ENCODE measurements at regions of chr17 and their contacts with region 1.

Region 1: GRCh38 chr17:81959362-81960129 is 1.4 kb downstream of the NOTUM start:
- DNase-seq: peak; percentile 67 to 96 (median 81)
- ATAC-seq: peak; percentile 97
- H3K4me3 ChIP-seq: peak overlapping the region; percentile 24
- H3K4me3 Mint-ChIP-seq: peak overlapping the region; percentile 34
- H3K27ac ChIP-seq: no peak overlapping the region
- H3K27ac Mint-ChIP-seq: no peak overlapping the region
- H3K4me1 ChIP-seq: peaks cover 21% of the 10 kb centered on the region
- H3K4me1 Mint-ChIP-seq: no peaks in the 10 kb centered on the region
- H3K27me3 ChIP-seq: peaks cover 26 to 31% of the 10 kb centered on the region in 2 experiments
- H3K27me3 Mint-ChIP-seq: peaks cover 14% of the 10 kb centered on the region
- CTCF ChIP-seq: peak; percentile 65

Region 2: GRCh38 chr17:81927653-81928543 is 31.6 kb before region 1 on chr17 and contains the start of gene MAFG:
- CTCF ChIA-PET with region 1: interaction called, 16 read pairs
- POLR2A ChIA-PET with region 1: interaction called, 5 read pairs
- intact Hi-C with region 1: no loop called
- DNase-seq: peak; percentile 78 to 97 (median 87)
- ATAC-seq: peak; percentile 58
- H3K4me3 ChIP-seq: peak within 1 kb of the TSS; percentile 61
- H3K4me3 Mint-ChIP-seq: peak within 1 kb of the TSS; percentile 88
- H3K27ac ChIP-seq: peak within 1 kb of the TSS; percentile 54 to 65
- H3K27ac Mint-ChIP-seq: peak within 1 kb of the TSS; percentile 88
- H3K4me1 ChIP-seq: peaks cover 51% of the 10 kb centered on the region
- H3K4me1 Mint-ChIP-seq: peaks cover 20% of the 10 kb centered on the region
- H3K27me3 ChIP-seq: peaks cover 19% of the 10 kb centered on the region in 2 experiments
- H3K27me3 Mint-ChIP-seq: peaks cover 16% of the 10 kb centered on the region
- CTCF ChIP-seq: no peak
- total RNA-seq, gene MAFG: 10.8 to 13.3 TPM

Region 3: DNA sequence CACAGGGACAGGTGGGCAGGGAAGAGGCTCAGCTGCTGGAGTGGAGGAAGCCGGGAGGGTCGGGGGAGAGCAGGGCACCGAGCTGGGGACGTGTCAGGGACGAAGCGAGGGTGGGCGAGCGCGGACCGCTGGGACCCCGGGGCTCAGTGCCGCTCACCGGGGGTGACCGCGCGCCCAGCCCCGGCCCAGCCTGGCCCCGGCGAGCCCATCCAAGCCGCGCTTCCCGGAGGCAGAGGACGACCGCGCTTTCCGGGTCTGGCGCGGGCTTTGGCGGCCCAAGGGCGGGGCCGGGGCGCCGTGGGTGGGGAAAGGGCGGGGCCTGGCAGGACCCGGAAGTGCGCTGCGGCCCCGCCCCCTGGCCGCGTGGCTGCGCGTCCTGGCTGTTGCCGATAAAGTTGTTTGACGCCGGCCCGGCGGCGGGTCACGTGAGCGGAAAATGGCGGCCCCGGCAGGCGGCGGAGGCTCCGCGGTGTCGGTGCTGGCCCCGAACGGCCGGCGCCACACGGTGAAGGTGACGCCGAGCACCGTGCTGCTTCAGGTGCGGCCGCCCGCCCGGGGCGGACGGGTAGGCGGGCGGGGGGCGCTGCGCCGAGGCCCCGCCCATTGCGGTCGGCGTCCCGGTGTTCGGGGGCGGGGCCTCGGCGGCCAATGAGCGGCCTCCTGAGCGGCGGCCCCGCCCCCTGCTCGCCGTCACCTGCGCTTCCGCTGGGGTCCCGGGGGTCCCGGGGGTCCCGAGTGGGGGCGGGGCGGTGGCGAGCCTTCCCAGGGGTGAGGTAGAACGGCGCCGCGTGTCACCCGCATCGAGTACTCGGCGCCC is 17.9 kb after region 1 on chr17 and contains the start of gene ASPSCR1:
- CTCF ChIA-PET with region 1: interaction called, 21 read pairs
- POLR2A ChIA-PET with region 1: interaction called, 10 read pairs
- intact Hi-C with region 1: loop called in 1 of 2 experiments (anchors 2 kb)
- DNase-seq: peak; percentile 81 to 96 (median 90)
- ATAC-seq: peak; percentile 88
- H3K4me3 ChIP-seq: peak within 1 kb of the TSS; percentile 68
- H3K4me3 Mint-ChIP-seq: peak within 1 kb of the TSS; percentile 99
- H3K27ac ChIP-seq: peak within 1 kb of the TSS; percentile 18 to 75
- H3K27ac Mint-ChIP-seq: peak within 1 kb of the TSS; percentile 95
- H3K4me1 ChIP-seq: peaks cover 50% of the 10 kb centered on the region
- H3K4me1 Mint-ChIP-seq: peaks cover 43% of the 10 kb centered on the region
- H3K27me3 ChIP-seq: no peaks in the 10 kb centered on the region
- H3K27me3 Mint-ChIP-seq: no peaks in the 10 kb centered on the region
- CTCF ChIP-seq: no peak
- total RNA-seq, gene ASPSCR1: 19.1 to 22.7 TPM

Region 4: DNA sequence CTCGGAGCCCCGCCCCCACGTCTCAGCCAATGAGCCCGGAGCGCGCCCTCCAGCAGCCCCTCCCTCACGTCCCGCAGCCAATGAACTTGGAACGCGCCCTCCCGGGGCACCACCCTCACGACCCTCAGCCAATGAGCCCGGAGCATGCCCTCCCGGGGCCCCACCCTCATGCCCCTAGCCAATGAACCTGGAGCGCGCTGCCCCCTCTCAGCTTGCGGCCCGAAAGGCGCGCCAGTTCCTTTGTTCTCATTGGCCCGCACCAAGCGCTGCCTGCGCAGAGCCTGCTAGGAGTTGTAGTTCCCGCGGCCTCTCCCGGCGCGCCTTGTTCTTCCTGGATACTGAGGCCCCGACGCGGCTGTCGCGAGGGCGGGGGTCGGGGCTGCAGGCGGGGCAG is 63.4 kb after region 1 on chr17 and contains the start of gene LRRC45:
- CTCF ChIA-PET with region 1: interaction called, 174 read pairs
- POLR2A ChIA-PET with region 1: interaction called, 51 read pairs
- intact Hi-C with region 1: loop called (anchors 1 kb)
- DNase-seq: peak; percentile 99 to 100 (median 100)
- ATAC-seq: peak; percentile 94
- H3K4me3 ChIP-seq: peak within 1 kb of the TSS; percentile 71
- H3K4me3 Mint-ChIP-seq: peak within 1 kb of the TSS; percentile 92
- H3K27ac ChIP-seq: peak within 1 kb of the TSS in 1 of 2 donors; percentile 46
- H3K27ac Mint-ChIP-seq: peak within 1 kb of the TSS; percentile 69
- H3K4me1 ChIP-seq: peaks cover 47% of the 10 kb centered on the region
- H3K4me1 Mint-ChIP-seq: peaks cover 21% of the 10 kb centered on the region
- H3K27me3 ChIP-seq: no peaks in the 10 kb centered on the region
- H3K27me3 Mint-ChIP-seq: no peaks in the 10 kb centered on the region
- CTCF ChIP-seq: no peak
- total RNA-seq, gene LRRC45: 17.7 to 17.9 TPM

Region 5: DNA sequence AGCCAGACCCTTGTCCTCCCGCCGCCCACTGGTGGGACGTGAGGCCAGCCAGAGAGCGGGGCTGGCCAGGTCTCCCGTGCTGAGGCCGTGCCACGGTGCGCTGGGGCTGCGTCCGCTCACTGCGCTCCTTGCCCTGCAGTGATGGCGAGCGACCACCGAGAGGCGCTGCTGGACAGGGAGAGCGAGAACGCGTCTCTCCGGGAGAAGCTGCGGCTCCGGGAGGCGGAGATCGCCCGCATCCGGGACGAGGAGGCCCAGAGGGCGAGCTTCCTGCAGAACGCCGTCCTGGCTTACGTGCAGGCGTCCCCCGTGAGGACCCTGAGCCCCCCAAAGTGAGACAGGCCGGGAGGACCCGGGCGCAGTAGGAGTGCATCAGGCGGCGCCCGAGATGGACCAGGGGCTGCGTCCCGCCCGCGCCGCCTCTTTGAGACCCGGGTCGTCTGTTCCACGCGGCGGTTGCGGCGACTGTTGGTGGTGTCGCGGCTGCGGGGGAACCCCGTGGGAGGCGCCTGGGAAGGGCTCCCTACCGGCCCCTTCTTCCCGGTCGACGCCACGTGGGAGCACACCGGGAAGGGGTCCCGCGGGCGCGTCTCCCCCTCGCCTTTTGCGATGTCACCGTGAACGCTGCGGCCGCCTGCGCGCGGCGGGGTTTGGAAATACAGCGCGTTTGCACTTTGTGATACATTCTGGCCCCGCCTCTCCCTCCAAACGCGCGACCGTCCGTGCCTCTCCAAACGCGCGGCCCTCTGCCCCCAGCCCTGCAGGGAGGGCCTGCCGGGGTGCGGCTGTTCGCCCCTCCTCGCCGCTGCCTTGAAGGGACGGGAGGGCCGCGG is 71.1 kb after region 1 on chr17:
- CTCF ChIA-PET with region 1: interaction called, 12 read pairs
- POLR2A ChIA-PET with region 1: interaction called, 5 read pairs
- intact Hi-C with region 1: no loop called
- DNase-seq: peak; percentile 73 to 92 (median 81)
- ATAC-seq: peak; percentile 85
- H3K4me3 ChIP-seq: peak overlapping the region; percentile 53
- H3K4me3 Mint-ChIP-seq: peak overlapping the region; percentile 91
- H3K27ac ChIP-seq: no peak overlapping the region
- H3K27ac Mint-ChIP-seq: no peak overlapping the region
- H3K4me1 ChIP-seq: peaks cover 28% of the 10 kb centered on the region
- H3K4me1 Mint-ChIP-seq: peaks cover 21% of the 10 kb centered on the region
- H3K27me3 ChIP-seq: no peaks in the 10 kb centered on the region
- H3K27me3 Mint-ChIP-seq: no peaks in the 10 kb centered on the region
- CTCF ChIP-seq: peak; percentile 97

Region 6: GRCh38 chr17:82120148-82120547 is 160.6 kb after region 1 on chr17:
- CTCF ChIA-PET with region 1: no interaction called
- POLR2A ChIA-PET with region 1: no interaction called
- intact Hi-C with region 1: loop called in 1 of 2 experiments (anchors 10 kb)
- DNase-seq: peak in 7 of 14 experiments; percentile 37 to 72 (median 54)
- ATAC-seq: peak; percentile 93
- H3K4me3 ChIP-seq: no peak overlapping the region
- H3K4me3 Mint-ChIP-seq: peak overlapping the region; percentile 52
- H3K27ac ChIP-seq: no peak overlapping the region
- H3K27ac Mint-ChIP-seq: peak overlapping the region; percentile 92
- H3K4me1 ChIP-seq: peaks cover 56% of the 10 kb centered on the region
- H3K4me1 Mint-ChIP-seq: peaks cover 62% of the 10 kb centered on the region
- H3K27me3 ChIP-seq: no peaks in the 10 kb centered on the region
- H3K27me3 Mint-ChIP-seq: no peaks in the 10 kb centered on the region
- CTCF ChIP-seq: no peak

Region 7: GRCh38 chr17:82153745-82154375 is 194.3 kb after region 1 on chr17:
- CTCF ChIA-PET with region 1: interaction called, 4 read pairs
- POLR2A ChIA-PET with region 1: no interaction called
- intact Hi-C with region 1: loop called in 1 of 2 experiments (anchors 1 kb)
- DNase-seq: peak; percentile 76 to 90 (median 82)
- ATAC-seq: peak; percentile 100
- H3K4me3 ChIP-seq: no peak overlapping the region
- H3K4me3 Mint-ChIP-seq: no peak overlapping the region
- H3K27ac ChIP-seq: no peak overlapping the region
- H3K27ac Mint-ChIP-seq: peak overlapping the region; percentile 69
- H3K4me1 ChIP-seq: peaks cover 10% of the 10 kb centered on the region
- H3K4me1 Mint-ChIP-seq: peaks cover 5% of the 10 kb centered on the region
- H3K27me3 ChIP-seq: no peaks in the 10 kb centered on the region
- H3K27me3 Mint-ChIP-seq: no peaks in the 10 kb centered on the region
- CTCF ChIP-seq: peak; percentile 91